PC-3 (cell line): ENCODE measurements at regions of chr17 and their contacts with region 1.

Region 1: GRCh38 chr17:74842599-74843351 is 16.9 kb downstream of the GRIN2C start:
- DNase-seq: peak; percentile 82
- ATAC-seq: peak; percentile 90
- H3K4me3 ChIP-seq: peak overlapping the region; percentile 71
- H3K27ac ChIP-seq: no peak overlapping the region
- H3K4me1 ChIP-seq: peaks cover 6% of the 10 kb centered on the region; the same call in 1 of the 2 replicates
- H3K27me3 ChIP-seq: no peaks in the 10 kb centered on the region
- CTCF ChIP-seq: peak; percentile 61

Region 2: DNA sequence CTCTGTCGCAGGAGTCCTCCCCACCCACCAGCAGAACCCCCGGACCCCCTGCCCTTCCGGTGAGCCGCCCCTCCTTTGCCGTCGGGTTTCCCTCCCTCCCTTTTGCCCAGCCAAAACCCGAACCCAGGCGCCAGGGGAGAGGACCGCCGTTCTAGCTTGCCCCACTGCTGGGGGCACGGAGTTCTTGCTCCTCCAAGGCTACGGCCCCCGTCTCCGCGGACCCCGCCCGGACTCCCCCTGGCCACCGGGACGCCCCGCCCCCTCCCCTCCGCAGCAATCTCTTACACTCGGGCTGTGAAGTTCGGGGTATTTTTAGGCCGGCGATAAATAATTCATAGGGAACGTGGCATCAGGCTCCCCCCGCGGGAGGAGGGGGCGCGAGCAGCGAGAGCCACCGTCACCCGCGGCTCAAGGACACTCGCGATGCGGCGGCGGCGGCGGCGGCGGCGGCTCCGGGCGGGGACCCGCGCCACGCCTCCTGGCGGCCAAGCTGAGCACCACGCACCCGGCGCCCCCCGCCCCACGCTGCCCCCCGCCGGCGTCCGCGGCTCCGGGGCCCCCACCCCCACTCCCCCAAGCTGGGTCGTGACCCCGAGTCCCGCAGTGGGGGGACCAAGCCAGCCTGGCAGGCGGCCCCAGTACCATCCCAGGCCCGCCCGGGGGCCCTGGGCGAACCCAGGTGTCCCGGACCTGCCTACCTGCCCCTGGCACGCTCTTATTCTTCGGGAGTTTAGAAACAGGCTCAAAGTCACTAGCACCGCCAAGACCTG is 16.9 kb after region 1 on chr17 and contains the start of gene GRIN2C:
- CTCF ChIA-PET with region 1: interaction called, 17 read pairs
- POLR2A ChIA-PET with region 1: no interaction called
- intact Hi-C with region 1: loop called (anchors 1 kb)
- DNase-seq: no peak
- ATAC-seq: 0 out of 2 replicates have a peak, but pooled peaks have one; percentile 18
- H3K4me3 ChIP-seq: peak within 1 kb of the TSS; percentile 54
- H3K27ac ChIP-seq: no peak within 1 kb of the TSS
- H3K4me1 ChIP-seq: no peaks in the 10 kb centered on the region
- H3K27me3 ChIP-seq: peaks cover 62% of the 10 kb centered on the region
- CTCF ChIP-seq: peak; percentile 49
- total RNA-seq, gene GRIN2C: 0.04 TPM in 1 of 2 replicates, not detected in the other